K562 (cell line): ENCODE measurements at regions of chr7 and their contacts with region 1.

Region 1: GRCh38 chr7:8365503-8366110 is 67.8 kb upstream of the NXPH1 start:
- DNase-seq: peak in 3 of 4 experiments; percentile 18 to 65 (median 22)
- ATAC-seq: peak; percentile 92
- H3K4me3 ChIP-seq: no peak overlapping the region
- H3K27ac ChIP-seq: no peak overlapping the region
- H3K4me1 ChIP-seq: no peaks in the 10 kb centered on the region
- H3K27me3 ChIP-seq: no peaks in the 10 kb centered on the region
- CTCF ChIP-seq: peak; percentile 59 to 67 (median 61)
- EP300 ChIP-seq: no peak
- POLR2A ChIP-seq: no peak
- RAD21 ChIP-seq: peak; percentile 47 to 76; a peak in 3 of 4 replicates

Region 2: DNA sequence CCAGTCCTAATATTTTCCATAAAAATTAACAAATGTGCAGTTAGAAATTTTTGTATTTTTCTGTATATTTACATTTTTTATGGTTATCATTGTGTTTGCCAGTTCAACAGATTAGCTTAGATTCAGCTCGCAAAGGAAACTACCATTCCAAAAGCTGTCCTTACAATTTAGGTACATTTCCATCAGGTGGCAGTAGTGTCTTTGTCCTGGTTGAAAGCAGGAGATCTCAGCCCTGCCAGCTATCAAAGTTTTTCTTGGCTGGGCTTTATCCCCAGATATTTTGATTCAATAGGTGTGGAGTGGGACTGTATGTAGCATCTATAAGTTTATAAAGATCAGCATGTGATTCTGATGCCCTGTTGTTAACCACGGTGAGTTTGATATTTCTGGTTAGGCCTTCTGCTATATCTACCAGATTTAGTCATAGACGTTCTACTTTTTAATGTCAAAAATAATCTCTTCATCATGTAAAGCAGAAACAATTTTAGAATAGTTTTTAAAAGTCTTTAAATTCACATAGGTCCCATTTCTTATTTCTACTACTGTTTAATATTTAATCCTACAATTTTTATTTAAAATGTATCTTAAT is 88.1 kb before region 1 on chr7:
- CTCF ChIA-PET with region 1: interaction called, 13 read pairs
- POLR2A ChIA-PET with region 1: no interaction called
- in situ Hi-C with region 1: no loop called
- intact Hi-C with region 1: loop called (anchors 1 kb)
- DNase-seq: peak in 2 of 4 experiments; percentile 42 to 44
- ATAC-seq: peak; percentile 84
- H3K4me3 ChIP-seq: no peak overlapping the region
- H3K27ac ChIP-seq: no peak overlapping the region
- H3K4me1 ChIP-seq: no peaks in the 10 kb centered on the region; a peak in 1 of 5 replicates
- H3K27me3 ChIP-seq: no peaks in the 10 kb centered on the region
- CTCF ChIP-seq: peak; percentile 47 to 57 (median 47); a peak in 4 of 6 replicates
- EP300 ChIP-seq: no peak
- POLR2A ChIP-seq: no peak
- RAD21 ChIP-seq: peak; percentile 35 to 69; a peak in 3 of 4 replicates

Region 3: GRCh38 chr7:8511855-8512254 is 146.2 kb after region 1 on chr7:
- CTCF ChIA-PET with region 1: no interaction called
- POLR2A ChIA-PET with region 1: no interaction called
- in situ Hi-C with region 1: no loop called
- intact Hi-C with region 1: no loop called
- DNase-seq: peak in 1 of 4 experiments; percentile 4
- ATAC-seq: no peak
- H3K4me3 ChIP-seq: no peak overlapping the region
- H3K27ac ChIP-seq: no peak overlapping the region
- H3K4me1 ChIP-seq: no peaks in the 10 kb centered on the region
- H3K27me3 ChIP-seq: no peaks in the 10 kb centered on the region
- CTCF ChIP-seq: no peak
- EP300 ChIP-seq: no peak
- POLR2A ChIP-seq: no peak
- RAD21 ChIP-seq: no peak